Caco-2 (cell line): ENCODE measurements at regions of chr11 and their contacts with region 1.

Region 1: DNA sequence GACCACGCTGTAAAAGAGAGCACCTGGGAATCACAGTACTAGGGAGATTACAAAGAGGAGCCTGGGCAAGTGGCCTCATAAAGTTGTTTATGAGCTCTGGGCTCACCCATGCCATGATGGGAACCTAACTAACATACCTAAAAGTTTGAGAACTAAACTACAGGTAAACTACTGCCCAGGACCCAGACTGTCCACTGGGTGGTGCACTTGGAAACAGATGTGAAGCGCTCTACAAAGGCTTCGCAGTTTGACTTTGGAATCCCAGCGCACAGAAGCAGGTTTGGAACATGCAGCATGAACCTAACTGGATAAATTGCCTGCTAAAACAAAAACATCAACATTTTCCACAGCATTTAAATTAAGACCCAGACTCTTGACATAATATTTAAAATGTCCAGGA is 418.6 kb downstream of the FAM181B start:
- DNase-seq: peak; percentile 68 to 74
- H3K4me3 ChIP-seq: no peak overlapping the region
- H3K4me3 Mint-ChIP-seq: no peak overlapping the region
- H3K27ac Mint-ChIP-seq: no peak overlapping the region
- H3K4me1 ChIP-seq: peaks cover 2% of the 10 kb centered on the region; the same call in 1 of the 2 replicates
- H3K4me1 Mint-ChIP-seq: no peaks in the 10 kb centered on the region
- H3K27me3 ChIP-seq: no peaks in the 10 kb centered on the region
- H3K27me3 Mint-ChIP-seq: peaks cover 8% of the 10 kb centered on the region
- CTCF ChIP-seq: peak; percentile 81 to 96

Region 2: GRCh38 chr11:82523141-82523540 is 208.0 kb after region 1 on chr11:
- CTCF ChIA-PET with region 1: no interaction called
- POLR2A ChIA-PET with region 1: no interaction called
- intact Hi-C with region 1: loop called (anchors 1 kb)
- DNase-seq: no peak
- H3K4me3 ChIP-seq: no peak overlapping the region
- H3K4me3 Mint-ChIP-seq: no peak overlapping the region
- H3K27ac Mint-ChIP-seq: no peak overlapping the region
- H3K4me1 ChIP-seq: no peaks in the 10 kb centered on the region
- H3K4me1 Mint-ChIP-seq: no peaks in the 10 kb centered on the region
- H3K27me3 ChIP-seq: 0 out of 2 replicates have a peak, but pooled peaks cover 1% of the 10 kb centered on the region
- H3K27me3 Mint-ChIP-seq: peaks cover 3% of the 10 kb centered on the region
- CTCF ChIP-seq: peak in 1 of 2 experiments; percentile 23

Region 3: DNA sequence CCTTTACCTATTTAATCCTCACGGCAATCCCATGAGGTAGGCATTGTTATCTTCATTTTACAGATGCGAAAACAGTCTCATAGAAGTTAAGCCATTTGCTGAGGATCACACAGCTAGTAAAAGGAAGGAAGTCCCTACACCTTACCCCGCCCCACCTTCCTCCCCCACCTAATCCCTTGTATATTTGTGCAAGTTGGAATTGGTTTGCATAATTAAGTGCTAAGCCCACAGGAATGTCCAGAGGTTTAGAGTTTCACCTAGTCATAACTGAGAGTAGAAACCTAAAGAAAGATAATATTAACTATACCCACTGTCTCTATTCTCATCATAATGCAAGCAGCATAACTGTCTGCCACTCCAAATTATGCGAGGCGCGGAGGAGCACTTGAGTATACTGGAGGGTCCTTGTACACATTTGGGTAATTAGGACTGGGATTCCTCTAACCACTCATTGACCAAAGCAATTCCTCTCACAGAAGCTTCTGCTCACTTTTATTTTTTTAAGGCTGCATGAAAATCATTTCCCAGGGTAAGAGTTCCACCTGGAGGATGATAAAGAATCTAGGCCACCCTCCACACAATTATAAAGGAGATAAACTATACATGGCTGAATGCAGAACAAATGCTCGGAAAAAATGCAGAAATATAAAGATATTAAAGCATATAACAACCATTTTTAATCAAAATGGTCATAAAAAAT is 218.7 kb after region 1 on chr11:
- CTCF ChIA-PET with region 1: no interaction called
- POLR2A ChIA-PET with region 1: no interaction called
- intact Hi-C with region 1: loop called (anchors 1 kb)
- DNase-seq: no peak
- H3K4me3 ChIP-seq: no peak overlapping the region
- H3K4me3 Mint-ChIP-seq: no peak overlapping the region
- H3K27ac Mint-ChIP-seq: no peak overlapping the region
- H3K4me1 ChIP-seq: no peaks in the 10 kb centered on the region
- H3K4me1 Mint-ChIP-seq: no peaks in the 10 kb centered on the region
- H3K27me3 ChIP-seq: no peaks in the 10 kb centered on the region
- H3K27me3 Mint-ChIP-seq: peaks cover 2% of the 10 kb centered on the region
- CTCF ChIP-seq: no peak

Region 4: DNA sequence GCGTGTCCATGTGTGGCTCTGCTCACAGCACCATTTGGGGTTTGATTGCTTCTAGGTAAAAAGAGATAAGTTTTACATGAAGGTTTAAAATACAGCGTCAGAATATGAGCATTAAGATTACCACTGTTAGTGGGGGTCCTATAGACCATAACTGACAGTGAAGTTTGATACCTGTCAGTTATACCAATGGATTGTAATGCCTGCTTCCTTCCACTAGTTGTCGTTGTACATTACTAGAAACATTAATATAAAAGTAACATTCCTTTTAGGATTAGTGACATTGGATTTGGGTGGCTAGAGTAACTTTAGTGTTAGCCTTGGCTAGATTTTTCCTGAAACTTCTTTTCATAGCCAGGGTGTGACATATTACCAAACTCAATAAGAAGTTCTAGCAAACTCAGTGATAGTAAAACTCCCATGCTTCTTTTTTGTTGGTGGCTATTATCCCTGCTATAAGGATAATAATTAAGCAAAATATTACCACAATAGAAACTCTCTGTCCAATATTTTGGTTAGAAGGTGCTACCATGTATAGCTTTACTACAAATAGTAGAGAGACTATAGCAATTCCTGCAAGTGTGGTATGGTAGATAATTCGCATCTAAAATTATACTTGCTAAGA is 361.5 kb after region 1 on chr11:
- CTCF ChIA-PET with region 1: no interaction called
- POLR2A ChIA-PET with region 1: no interaction called
- intact Hi-C with region 1: loop called (anchors 1 kb)
- DNase-seq: no peak
- H3K4me3 ChIP-seq: no peak overlapping the region
- H3K4me3 Mint-ChIP-seq: no peak overlapping the region
- H3K27ac Mint-ChIP-seq: no peak overlapping the region
- H3K4me1 ChIP-seq: no peaks in the 10 kb centered on the region
- H3K4me1 Mint-ChIP-seq: no peaks in the 10 kb centered on the region
- H3K27me3 ChIP-seq: no peaks in the 10 kb centered on the region
- H3K27me3 Mint-ChIP-seq: peaks cover 11% of the 10 kb centered on the region
- CTCF ChIP-seq: peak; percentile 63 to 64

Region 5: DNA sequence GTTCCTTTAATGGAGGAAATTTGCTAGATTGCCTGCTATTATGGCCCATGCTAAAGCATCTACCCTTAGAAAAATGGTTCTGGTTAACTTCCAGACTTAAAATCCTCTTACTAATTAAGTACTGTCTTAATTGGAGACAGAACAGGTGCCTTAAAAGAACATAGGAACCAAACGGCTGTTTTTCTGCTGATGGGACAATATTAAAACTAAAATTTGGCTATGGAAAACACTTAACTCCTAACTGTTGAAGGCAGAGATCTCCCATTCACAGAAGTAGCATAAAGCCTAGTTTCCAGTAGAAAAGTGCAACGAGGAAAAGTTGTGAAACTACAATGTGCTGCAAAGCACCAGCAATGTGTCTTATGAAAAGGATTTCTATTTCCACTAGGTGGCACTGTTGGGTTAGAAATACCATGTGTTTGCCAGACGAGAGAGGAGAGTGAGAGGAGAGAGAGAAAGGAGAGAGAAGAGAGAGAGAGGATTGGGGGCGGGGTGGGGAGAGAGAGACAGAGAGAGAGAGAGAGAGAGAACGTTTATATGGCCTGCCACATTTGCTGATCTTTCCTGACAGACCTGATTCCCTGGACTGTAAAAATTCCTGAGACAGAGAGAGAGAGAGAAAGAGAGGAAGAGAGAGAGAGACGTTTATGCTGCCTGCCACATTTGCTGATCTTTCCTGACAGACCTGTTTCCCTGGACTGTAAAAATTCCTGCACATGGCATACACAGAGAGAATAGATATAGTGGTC is 367.1 kb after region 1 on chr11:
- CTCF ChIA-PET with region 1: no interaction called
- POLR2A ChIA-PET with region 1: no interaction called
- intact Hi-C with region 1: loop called (anchors 1 kb)
- DNase-seq: peak; percentile 57 to 78
- H3K4me3 ChIP-seq: no peak overlapping the region
- H3K4me3 Mint-ChIP-seq: peak overlapping the region; percentile 45
- H3K27ac Mint-ChIP-seq: no peak overlapping the region
- H3K4me1 ChIP-seq: no peaks in the 10 kb centered on the region
- H3K4me1 Mint-ChIP-seq: peaks cover 12% of the 10 kb centered on the region
- H3K27me3 ChIP-seq: no peaks in the 10 kb centered on the region; the same call in 1 of the 2 replicates
- H3K27me3 Mint-ChIP-seq: peaks cover 3% of the 10 kb centered on the region
- CTCF ChIP-seq: peak; percentile 72 to 76

Region 6: DNA sequence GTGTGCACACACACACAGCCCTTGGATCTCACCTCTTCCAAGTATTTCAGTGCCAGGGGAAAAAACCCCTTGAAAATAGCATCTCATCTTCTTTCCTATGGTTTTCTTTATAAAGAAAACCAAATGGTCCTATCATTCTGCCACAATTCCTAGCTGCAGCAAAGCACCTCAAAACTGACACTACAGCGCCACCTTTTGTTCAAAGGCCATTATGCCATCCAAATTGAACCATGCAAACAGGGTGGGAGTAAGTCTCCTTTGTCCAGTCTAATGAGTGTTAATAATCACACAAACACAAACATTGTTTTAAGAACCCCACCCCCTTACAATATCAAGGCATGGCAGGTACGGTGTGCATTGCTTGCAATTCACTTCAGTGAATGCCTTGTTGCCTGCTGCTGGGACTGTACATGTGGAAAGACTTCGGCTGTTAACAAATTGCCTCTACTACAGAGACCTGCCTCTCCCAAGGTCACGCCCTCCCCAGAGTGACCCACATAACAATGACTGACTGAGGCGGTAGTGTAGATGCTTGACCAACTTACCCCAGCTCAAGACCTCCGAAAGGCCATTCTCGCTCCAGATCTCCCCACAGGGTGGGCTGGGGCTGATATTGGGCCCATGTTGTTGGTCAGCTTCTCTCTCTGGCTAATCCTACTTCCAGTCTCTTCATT is 386.9 kb after region 1 on chr11:
- CTCF ChIA-PET with region 1: no interaction called
- POLR2A ChIA-PET with region 1: no interaction called
- intact Hi-C with region 1: loop called (anchors 1 kb)
- DNase-seq: peak; percentile 59 to 71
- H3K4me3 ChIP-seq: no peak overlapping the region
- H3K4me3 Mint-ChIP-seq: no peak overlapping the region
- H3K27ac Mint-ChIP-seq: no peak overlapping the region
- H3K4me1 ChIP-seq: no peaks in the 10 kb centered on the region
- H3K4me1 Mint-ChIP-seq: no peaks in the 10 kb centered on the region
- H3K27me3 ChIP-seq: no peaks in the 10 kb centered on the region; the same call in 1 of the 2 replicates
- H3K27me3 Mint-ChIP-seq: peaks cover 2% of the 10 kb centered on the region
- CTCF ChIP-seq: peak; percentile 81 to 86